ENCODE measurements at regions of chr6 and their contacts with region 1.

Region 1: GRCh38 chr6:28355743-28356665 is 6.3 kb downstream of the ZKSCAN3 start:
- DNase-seq: peak; percentile 87
- H3K4me3 Mint-ChIP-seq: peak overlapping the region; percentile 83
- H3K27ac Mint-ChIP-seq: peak overlapping the region; percentile 79
- H3K4me1 Mint-ChIP-seq: peaks cover 12% of the 10 kb centered on the region
- H3K27me3 Mint-ChIP-seq: no peaks in the 10 kb centered on the region
- CTCF ChIP-seq: peak; percentile 60

Region 2: GRCh38 chr6:28053584-28053983 is 302.4 kb before region 1 on chr6:
- CTCF ChIA-PET with region 1: no interaction called
- POLR2A ChIA-PET with region 1: no interaction called
- intact Hi-C with region 1: no loop called
- DNase-seq: no peak
- H3K4me3 Mint-ChIP-seq: no peak overlapping the region
- H3K27ac Mint-ChIP-seq: no peak overlapping the region
- H3K4me1 Mint-ChIP-seq: no peaks in the 10 kb centered on the region
- H3K27me3 Mint-ChIP-seq: peaks cover 54% of the 10 kb centered on the region
- CTCF ChIP-seq: no peak

Region 3: DNA sequence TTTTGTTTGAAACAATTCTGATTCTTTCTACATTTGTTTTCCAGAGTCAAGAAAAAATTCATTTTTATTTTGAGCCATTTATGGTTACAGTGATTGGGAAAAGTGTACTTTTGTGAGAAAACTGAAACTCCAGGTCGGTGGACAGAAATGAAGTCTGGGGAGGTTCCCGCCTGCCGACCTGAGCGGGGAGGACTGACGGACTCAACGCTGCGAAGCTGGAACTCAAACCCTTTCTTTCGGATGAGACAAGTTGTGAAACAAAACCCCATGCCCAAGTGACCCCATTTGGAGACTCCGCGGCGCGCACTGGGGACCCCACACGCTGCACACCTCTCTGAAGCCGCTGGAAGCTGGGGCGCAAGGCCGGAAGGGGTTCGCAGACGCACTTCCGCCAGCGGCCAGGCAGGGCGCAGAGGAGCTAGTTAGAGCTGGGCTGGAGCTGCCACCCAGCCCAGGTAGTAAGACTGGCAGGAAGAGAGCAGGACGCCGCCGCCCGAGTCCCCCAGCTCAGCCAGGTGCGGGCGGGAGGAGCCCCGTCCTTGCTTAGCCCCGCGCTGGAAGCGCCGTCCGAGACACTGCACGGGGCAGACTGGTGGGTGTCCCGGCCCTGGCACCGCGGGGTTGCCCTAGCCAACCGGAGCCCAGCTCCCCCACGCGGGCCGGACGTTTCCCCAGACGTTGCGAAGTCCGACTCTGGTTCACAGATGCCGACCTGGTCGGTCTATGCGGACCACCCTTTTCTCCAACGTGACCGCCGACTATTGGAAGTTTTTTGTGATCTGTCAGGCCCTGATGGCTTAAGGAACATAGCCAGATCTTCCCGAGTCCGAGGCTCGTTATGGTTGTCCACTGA is 251.4 kb before region 1 on chr6:
- CTCF ChIA-PET with region 1: interaction called, 11 read pairs
- POLR2A ChIA-PET with region 1: interaction called, 5 read pairs
- intact Hi-C with region 1: no loop called
- DNase-seq: peak; percentile 78
- H3K4me3 Mint-ChIP-seq: peak overlapping the region; percentile 83
- H3K27ac Mint-ChIP-seq: peak overlapping the region; percentile 63
- H3K4me1 Mint-ChIP-seq: no peaks in the 10 kb centered on the region
- H3K27me3 Mint-ChIP-seq: no peaks in the 10 kb centered on the region
- CTCF ChIP-seq: peak; percentile 59

Region 4: DNA sequence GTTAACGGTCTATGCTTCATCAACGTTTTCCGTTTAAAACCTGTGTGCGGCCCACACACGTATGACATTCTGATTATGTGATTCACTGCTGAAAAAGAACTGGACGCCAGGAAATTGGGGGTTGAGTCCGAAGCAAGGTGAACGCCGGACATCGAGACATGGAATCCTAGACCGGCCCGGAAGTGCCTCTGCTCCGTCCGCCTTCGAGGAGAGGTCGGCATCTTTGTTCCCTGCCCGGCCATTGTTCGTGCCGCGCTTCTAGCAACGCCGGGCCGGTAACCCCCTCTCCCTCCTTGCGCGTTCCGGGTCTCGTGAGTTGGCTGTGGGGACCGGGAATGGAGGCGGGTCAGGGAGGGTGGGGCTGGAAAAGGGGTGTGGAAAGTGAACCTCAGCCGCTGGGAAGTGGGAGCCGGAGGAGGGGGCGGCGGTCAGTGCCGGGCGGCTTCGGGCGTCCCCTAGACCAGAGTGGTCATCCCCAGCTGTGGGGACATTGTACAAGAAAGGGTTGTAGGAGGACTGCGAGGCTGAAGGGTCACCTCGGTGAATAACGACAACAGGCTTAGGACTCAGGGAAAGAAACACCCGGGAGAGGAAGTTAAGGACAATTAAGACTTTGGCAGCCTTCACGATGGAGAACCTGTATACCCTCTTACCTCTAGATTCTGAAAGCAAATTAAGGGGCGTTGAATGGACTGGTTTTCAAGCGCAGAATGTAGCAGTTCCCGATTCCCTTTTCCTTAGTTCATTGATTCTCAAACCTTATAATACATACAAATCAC is 130.8 kb before region 1 on chr6 and contains the start of gene ZSCAN9:
- CTCF ChIA-PET with region 1: interaction called, 5 read pairs
- POLR2A ChIA-PET with region 1: interaction called, 4 read pairs
- intact Hi-C with region 1: loop called (anchors 2 kb)
- DNase-seq: peak; percentile 93
- H3K4me3 Mint-ChIP-seq: peak within 1 kb of the TSS; percentile 94
- H3K27ac Mint-ChIP-seq: peak within 1 kb of the TSS; percentile 97
- H3K4me1 Mint-ChIP-seq: peaks cover 16% of the 10 kb centered on the region
- H3K27me3 Mint-ChIP-seq: no peaks in the 10 kb centered on the region
- CTCF ChIP-seq: no peak
- total RNA-seq, gene ZSCAN9: 13.7 and 15.6 TPM in 2 replicates

Region 5: DNA sequence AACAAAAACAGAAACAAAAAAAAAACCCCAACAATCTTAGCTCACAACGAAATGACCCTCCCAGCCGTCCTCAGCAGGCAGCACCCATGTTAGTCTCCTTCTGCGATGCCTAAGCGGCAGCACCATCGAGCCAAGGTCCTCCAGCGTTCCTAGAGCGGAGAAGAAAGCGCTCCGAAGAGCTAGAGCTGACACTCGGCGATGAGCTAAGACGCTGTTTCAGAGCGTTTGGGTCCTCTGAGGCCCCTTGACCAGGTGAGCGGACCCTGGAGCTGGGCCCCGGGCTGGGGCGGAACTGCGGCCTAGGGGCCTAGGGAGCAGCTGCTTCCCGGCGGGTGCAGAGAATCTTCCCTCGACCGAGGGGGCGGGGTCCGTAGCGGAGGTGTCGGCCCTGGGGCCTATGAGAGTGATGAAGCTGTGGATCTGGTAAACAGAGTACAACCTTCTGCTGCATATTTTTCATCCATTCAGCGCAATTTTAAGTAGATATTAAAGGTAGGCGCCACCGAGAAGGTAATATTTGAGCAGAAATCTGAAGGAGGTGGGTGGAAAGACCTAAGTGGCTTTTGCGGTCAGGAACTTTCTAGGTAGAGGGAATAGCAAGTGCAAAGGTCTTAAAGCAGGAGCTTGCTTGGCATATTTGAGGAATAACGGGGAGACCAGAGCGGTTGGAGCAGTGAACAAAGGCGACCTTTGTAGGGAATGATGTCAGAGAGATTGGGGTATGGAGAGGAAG is 88.9 kb before region 1 on chr6 and contains the start of gene ZSCAN26:
- CTCF ChIA-PET with region 1: interaction called, 32 read pairs
- POLR2A ChIA-PET with region 1: interaction called, 110 read pairs
- intact Hi-C with region 1: loop called (anchors 5 kb)
- DNase-seq: peak; percentile 89
- H3K4me3 Mint-ChIP-seq: no peak within 1 kb of the TSS
- H3K27ac Mint-ChIP-seq: no peak within 1 kb of the TSS
- H3K4me1 Mint-ChIP-seq: no peaks in the 10 kb centered on the region
- H3K27me3 Mint-ChIP-seq: no peaks in the 10 kb centered on the region
- CTCF ChIP-seq: no peak
- total RNA-seq, gene ZSCAN26: 11.3 and 13.1 TPM in 2 replicates

Region 6: GRCh38 chr6:28335564-28336283 is 20.3 kb before region 1 on chr6 and contains the start of gene ZSCAN31:
- CTCF ChIA-PET with region 1: interaction called, 14 read pairs
- POLR2A ChIA-PET with region 1: interaction called, 71 read pairs
- intact Hi-C with region 1: no loop called
- DNase-seq: peak; percentile 98
- H3K4me3 Mint-ChIP-seq: no peak within 1 kb of the TSS
- H3K27ac Mint-ChIP-seq: no peak within 1 kb of the TSS
- H3K4me1 Mint-ChIP-seq: no peaks in the 10 kb centered on the region
- H3K27me3 Mint-ChIP-seq: no peaks in the 10 kb centered on the region
- CTCF ChIP-seq: no peak
- total RNA-seq, gene ZSCAN31: 5.0 and 6.7 TPM in 2 replicates

Region 7: DNA sequence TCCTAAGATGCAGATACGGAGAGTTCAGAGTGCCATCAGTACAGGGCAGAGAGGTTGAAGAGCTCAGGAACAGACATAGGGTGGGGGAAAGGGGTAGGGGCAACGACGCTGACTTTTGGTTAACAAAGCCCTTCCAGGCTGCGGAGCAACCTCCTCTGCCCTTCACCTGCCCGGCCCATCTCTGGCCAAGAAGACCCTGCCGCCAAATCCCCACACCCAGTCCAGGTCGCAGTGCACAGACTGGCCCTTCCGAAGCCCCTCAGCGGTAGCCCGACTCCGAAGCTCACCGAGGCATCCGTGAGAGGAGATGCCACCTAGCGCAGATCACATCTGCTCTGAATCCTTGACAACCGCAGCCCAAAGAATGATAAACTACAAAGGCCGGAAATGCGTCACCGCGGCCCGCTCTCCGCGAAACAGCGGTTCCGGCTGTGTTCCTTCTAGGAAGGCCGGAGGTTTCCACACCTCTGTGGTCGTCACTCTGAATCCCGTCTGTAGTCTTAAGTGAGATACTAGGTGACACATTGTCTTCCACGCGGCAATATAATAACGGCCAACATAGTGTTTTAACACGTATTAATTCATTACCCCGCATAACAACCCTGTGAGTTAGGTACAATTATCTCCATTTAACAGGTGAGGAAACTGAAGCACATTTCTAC is 87.2 kb after region 1 on chr6 and contains the start of gene ZSCAN23:
- CTCF ChIA-PET with region 1: no interaction called
- POLR2A ChIA-PET with region 1: no interaction called
- intact Hi-C with region 1: no loop called
- DNase-seq: peak; percentile 85
- H3K4me3 Mint-ChIP-seq: peak within 1 kb of the TSS; percentile 99
- H3K27ac Mint-ChIP-seq: peak within 1 kb of the TSS; percentile 93
- H3K4me1 Mint-ChIP-seq: peaks cover 11% of the 10 kb centered on the region
- H3K27me3 Mint-ChIP-seq: peaks cover 11% of the 10 kb centered on the region
- CTCF ChIP-seq: no peak
- total RNA-seq, gene ZSCAN23: 3.0 and 4.7 TPM in 2 replicates

Region 8: DNA sequence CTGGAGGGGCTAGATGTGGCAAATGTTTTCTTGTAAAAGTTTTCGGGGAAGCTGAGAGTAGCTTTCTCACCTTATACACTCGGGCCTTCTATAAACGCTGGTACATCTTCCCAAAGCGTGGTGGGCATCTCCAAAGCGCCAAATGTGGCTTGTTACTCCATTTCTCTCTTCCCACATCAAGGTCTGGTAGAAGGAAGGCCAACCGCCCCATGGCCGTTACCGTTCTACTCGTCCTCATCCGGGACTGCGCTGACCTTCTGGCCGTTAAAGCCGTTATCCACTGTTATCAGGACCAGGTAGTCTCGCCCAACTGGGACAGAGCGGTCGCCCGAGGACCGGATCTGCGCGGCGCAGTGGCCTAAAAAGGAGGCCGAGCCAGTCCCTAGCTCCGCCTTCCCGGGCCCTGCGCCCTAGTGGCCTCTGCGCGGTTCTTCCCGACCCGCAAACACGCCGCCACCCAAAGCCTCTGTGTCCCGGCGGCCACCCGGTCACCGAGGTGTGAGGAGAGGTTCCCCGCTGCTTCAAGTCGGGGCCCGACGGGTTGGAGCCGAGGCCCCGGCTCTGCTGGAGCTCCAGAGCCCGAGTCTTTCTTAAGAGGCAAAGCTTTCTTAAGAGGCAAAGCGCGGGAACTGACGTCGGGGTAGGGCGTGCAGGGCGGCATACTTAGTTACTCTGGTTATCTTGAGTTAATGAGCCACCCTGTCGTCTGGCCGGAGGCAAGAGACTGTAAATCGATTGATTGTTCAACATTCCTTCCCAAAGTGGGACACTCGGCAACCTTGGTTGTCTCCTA is 260.1 kb after region 1 on chr6:
- CTCF ChIA-PET with region 1: no interaction called
- POLR2A ChIA-PET with region 1: no interaction called
- intact Hi-C with region 1: no loop called
- DNase-seq: no peak
- H3K4me3 Mint-ChIP-seq: no peak overlapping the region
- H3K27ac Mint-ChIP-seq: no peak overlapping the region
- H3K4me1 Mint-ChIP-seq: no peaks in the 10 kb centered on the region
- H3K27me3 Mint-ChIP-seq: no peaks in the 10 kb centered on the region
- CTCF ChIP-seq: no peak

Region 9: DNA sequence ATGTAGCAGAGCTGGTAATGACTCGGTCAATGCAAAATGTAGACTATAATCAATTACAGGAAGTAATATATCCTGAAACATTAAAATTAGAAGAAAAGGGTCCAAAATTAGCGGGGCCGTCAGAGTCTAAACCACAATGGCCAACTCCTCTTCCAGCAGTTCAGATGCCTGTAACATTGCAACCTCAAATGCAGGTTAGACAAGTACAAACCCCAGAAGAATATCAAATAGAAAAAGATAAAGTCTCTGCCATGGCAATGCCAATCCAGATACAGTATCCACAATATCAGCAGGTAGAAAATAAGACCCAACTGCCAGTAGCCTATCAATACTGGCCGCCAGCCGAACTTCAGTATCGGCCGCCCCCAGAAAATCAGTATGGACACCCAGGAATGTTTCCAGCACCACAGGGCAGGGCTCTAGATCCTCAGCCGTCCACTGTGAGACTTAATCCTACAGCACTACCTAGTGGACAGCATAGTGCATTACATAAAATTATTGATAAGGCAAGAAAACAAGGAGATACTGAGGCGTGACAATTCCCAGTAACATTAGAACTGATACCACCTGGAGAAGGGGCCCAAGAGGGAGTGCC is 328.0 kb after region 1 on chr6:
- CTCF ChIA-PET with region 1: no interaction called
- POLR2A ChIA-PET with region 1: no interaction called
- intact Hi-C with region 1: loop called (anchors 1 kb)
- DNase-seq: peak; percentile 70
- H3K4me3 Mint-ChIP-seq: no peak overlapping the region
- H3K27ac Mint-ChIP-seq: no peak overlapping the region
- H3K4me1 Mint-ChIP-seq: peaks cover 19% of the 10 kb centered on the region
- H3K27me3 Mint-ChIP-seq: no peaks in the 10 kb centered on the region
- CTCF ChIP-seq: peak; percentile 77

Region 10: DNA sequence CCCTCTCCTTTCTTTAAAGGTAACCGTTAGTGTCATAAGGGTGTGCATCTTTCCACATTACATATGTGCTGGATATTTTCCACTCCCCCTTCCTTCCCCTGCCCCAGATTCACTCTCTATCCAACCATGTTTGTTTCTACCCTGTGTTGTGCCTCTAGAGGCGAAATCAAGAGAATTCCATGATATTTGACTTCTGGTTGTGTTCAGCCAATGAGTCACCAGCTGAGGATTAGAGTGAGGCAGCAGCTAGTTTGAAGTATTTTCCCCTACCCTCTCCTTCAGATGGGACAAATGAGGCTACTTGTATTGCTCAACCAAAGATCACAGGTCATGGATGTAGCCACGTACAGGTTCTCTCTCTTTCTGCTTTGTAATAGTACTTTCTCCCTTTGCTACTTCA is 790.1 kb after region 1 on chr6:
- CTCF ChIA-PET with region 1: no interaction called
- POLR2A ChIA-PET with region 1: no interaction called
- intact Hi-C with region 1: no loop called
- DNase-seq: peak; percentile 2
- H3K4me3 Mint-ChIP-seq: no peak overlapping the region
- H3K27ac Mint-ChIP-seq: no peak overlapping the region
- H3K4me1 Mint-ChIP-seq: no peaks in the 10 kb centered on the region
- H3K27me3 Mint-ChIP-seq: peaks cover 66% of the 10 kb centered on the region
- CTCF ChIP-seq: no peak

Measured in MCF 10A (cell line).